Colonic mucosa (tissue), 4 donors: ENCODE measurements at regions of chr11 and their contacts with region 1.

Region 1: DNA sequence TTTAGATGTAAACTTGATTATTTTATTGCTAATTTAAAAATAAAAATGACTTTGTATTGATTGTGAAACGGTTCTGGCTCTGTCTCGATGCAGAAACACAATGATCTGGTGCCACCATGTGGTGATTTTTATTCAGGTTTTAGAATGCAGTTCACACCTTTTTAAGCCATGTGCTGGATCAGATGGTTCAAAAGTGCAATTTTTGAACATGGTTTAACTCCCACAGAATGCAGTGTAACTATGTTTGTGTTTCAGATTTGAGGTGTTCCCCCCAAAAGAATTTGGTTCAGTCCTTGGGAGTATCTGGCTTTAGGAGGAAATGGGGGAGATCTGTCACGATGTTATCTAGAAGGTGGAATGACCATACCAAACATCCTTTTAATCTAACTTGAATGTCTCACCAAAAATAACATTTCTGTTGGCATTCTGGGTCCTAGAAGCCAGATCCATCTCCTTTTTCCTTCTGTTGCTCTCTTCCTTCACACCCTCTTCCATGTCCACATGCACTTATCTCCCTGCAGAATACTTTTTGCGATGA is 7.9 kb downstream of the MRPL16 start:
- DNase-seq: peak; percentile 60
- H3K4me3 ChIP-seq: no peak overlapping the region
- H3K27ac ChIP-seq: no peak overlapping the region
- H3K4me1 ChIP-seq: peaks cover 8% of the 10 kb centered on the region
- H3K27me3 ChIP-seq: no peaks in the 10 kb centered on the region
- CTCF ChIP-seq: peak; percentile 55

Region 2: GRCh38 chr11:59534676-59535075 is 268.0 kb before region 1 on chr11:
- intact Hi-C with region 1: loop called (anchors 10 kb)
- DNase-seq: no peak
- H3K4me3 ChIP-seq: no peak overlapping the region
- H3K27ac ChIP-seq: no peak overlapping the region
- H3K4me1 ChIP-seq: no peaks in the 10 kb centered on the region
- H3K27me3 ChIP-seq: no peaks in the 10 kb centered on the region
- CTCF ChIP-seq: no peak

Region 3: GRCh38 chr11:59669611-59670009 is 133.1 kb before region 1 on chr11:
- intact Hi-C with region 1: loop called (anchors 10 kb)
- DNase-seq: peak; percentile 47
- H3K4me3 ChIP-seq: peak overlapping the region; percentile 80
- H3K27ac ChIP-seq: peak overlapping the region; percentile 99
- H3K4me1 ChIP-seq: peaks cover 4% of the 10 kb centered on the region
- H3K27me3 ChIP-seq: no peaks in the 10 kb centered on the region
- CTCF ChIP-seq: no peak

Region 4: GRCh38 chr11:59753650-59754493 is 48.8 kb before region 1 on chr11:
- intact Hi-C with region 1: loop called (anchors 2 kb)
- DNase-seq: peak; percentile 95
- H3K4me3 ChIP-seq: peak overlapping the region; percentile 93
- H3K27ac ChIP-seq: peak overlapping the region; percentile 98
- H3K4me1 ChIP-seq: peaks cover 9% of the 10 kb centered on the region
- H3K27me3 ChIP-seq: no peaks in the 10 kb centered on the region
- CTCF ChIP-seq: peak; percentile 87